Left cardiac atrium (tissue), 4 donors: ENCODE measurements at regions of chr12 and their contacts with region 1.

Region 1: DNA sequence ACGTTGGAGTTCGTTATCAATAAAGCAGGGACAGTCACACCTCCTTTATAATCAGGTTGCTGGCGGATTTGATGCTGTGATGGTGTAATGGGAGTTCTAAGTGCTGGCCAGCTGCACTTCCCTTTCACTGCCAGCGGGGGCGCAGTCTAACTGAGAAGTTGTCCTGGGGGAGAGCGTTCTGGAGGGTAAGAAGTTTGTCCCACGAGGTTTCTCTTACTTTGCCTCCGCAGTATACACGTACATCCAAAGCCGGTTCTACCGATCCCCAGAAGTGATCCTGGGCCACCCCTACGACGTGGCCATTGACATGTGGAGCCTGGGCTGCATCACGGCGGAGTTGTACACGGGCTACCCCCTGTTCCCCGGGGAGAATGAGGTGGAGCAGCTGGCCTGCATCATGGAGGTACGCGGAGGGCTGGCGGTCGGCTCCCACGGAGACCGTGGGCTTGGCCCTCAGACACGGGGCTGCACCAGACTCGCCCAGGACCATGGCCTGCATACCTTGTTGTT is 42.7 kb downstream of the DYRK4 start:
- DNase-seq: peak; percentile 78
- ATAC-seq: peak; percentile 94 to 95

Region 2: DNA sequence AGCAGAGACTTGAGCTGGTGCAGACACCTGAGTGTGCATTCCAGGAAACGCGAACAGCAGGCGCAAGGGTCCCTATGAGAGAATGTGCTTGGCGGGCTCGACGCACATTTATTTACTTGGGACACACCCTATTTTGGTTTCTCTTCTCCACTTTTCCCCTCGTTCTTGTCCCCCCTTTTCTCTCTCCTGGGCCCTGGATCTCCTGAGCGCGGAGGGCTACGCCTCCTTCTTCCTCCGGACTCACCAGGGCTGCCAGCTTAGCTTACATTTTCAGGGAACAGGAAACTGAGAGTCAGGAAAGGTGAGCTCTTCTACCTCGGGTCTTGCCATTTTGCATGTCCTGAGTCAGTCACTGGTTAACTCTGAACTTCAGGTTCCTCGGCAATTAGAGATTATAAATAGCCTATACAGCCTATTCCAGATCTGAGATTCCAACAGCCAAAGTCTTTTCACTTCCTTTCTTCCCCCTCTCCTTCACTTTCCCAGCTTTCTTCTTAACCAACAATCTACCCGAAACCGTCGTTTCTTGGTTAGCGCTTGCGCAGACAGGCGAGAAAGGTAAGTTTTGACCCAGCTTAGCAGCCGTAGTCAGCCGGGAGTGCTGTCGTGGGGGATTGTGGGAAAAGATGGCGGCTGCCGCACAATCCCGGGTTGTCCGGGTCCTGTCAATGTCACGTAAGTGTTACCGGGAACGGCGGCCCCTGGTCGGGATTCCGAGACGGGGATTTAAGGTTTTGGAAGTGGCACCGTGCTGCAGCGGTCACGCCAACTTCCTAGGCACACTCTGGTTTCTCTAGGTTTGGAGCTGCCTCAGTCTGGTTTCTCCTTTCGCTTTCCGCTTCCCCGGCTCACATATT is 44.0 kb after region 1 on chr12 and contains the starts of genes AKAP3 and NDUFA9:
- intact Hi-C with region 1: loop called in 1 of 2 experiments (anchors 5 kb)
- DNase-seq: peak; percentile 84
- ATAC-seq: peak; percentile 98 to 99
- total RNA-seq, gene AKAP3: 5.2 to 5.9 TPM
- total RNA-seq, gene NDUFA9: 201 to 225 TPM

Region 3: DNA sequence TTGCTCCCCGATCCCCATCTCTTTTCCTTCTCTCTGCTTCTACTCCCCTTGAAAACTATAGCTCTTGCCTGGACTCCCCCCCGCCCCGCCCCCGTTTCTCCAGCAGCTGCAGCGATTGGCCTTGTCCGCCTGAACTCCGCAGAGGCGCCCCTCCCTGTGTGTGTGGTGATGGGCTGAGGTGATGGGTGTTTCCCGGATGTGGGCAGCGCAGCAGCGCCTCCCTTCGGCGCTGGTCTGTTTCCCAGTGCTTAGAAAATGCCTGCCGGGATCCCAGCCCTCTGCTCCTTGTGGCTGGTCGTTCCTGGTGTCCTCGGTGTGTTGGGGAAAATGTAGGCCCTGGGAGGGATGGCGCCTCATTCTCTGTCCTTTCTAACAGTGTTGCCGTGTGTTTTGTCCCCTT is 158.8 kb after region 1 on chr12:
- intact Hi-C with region 1: loop called in 1 of 2 experiments (anchors 10 kb)
- DNase-seq: no peak
- ATAC-seq: peak in 1 of 2 donors; percentile 24